Panc1 (cell line): ENCODE measurements at regions of chr7 and their contacts with region 1.

Region 1: GRCh38 chr7:101558742-101559325 is 70.3 kb downstream of the MYL10 start:
- DNase-seq: no peak
- ATAC-seq: peak; percentile 78
- H3K4me3 ChIP-seq: no peak overlapping the region
- H3K27ac ChIP-seq: no peak overlapping the region
- H3K4me1 ChIP-seq: 0 out of 2 replicates have a peak, but pooled peaks cover 4% of the 10 kb centered on the region
- H3K27me3 ChIP-seq: no peaks in the 10 kb centered on the region
- CTCF ChIP-seq: no peak; the same call in 1 of the 2 replicates

Region 2: DNA sequence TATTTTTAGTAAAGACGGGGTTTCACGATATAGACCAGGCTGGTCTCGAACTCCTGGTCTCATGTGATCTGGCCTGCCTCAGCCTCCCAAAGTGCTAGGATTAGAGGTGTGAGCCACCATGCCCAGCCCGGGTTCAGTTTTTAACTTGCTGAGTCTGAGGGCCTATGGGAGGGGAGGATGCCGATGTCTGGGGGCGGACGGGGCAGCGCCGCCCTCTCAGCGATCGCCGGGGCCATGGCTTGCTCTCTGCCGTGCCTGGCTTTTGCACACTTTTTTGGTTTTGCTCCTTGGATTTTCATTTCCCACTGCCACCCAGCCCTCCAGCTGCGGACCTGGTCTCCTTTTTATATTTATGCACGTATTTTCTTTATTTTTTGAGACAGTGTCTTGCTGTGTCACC is 211.4 kb before region 1 on chr7:
- CTCF ChIA-PET with region 1: no interaction called
- POLR2A ChIA-PET with region 1: interaction called, 15 read pairs
- in situ Hi-C with region 1: no loop called
- intact Hi-C with region 1: no loop called
- DNase-seq: no peak
- ATAC-seq: no peak
- H3K4me3 ChIP-seq: no peak overlapping the region
- H3K27ac ChIP-seq: no peak overlapping the region
- H3K4me1 ChIP-seq: peaks cover 5% of the 10 kb centered on the region
- H3K27me3 ChIP-seq: no peaks in the 10 kb centered on the region
- CTCF ChIP-seq: no peak

Region 3: GRCh38 chr7:101622609-101623173 is 63.9 kb after region 1 on chr7:
- CTCF ChIA-PET with region 1: interaction called, 3 read pairs
- POLR2A ChIA-PET with region 1: interaction called, 13 read pairs
- in situ Hi-C with region 1: no loop called
- intact Hi-C with region 1: no loop called
- DNase-seq: no peak
- ATAC-seq: no peak
- H3K4me3 ChIP-seq: no peak overlapping the region
- H3K27ac ChIP-seq: no peak overlapping the region
- H3K4me1 ChIP-seq: peaks cover 8% of the 10 kb centered on the region; the same call in 1 of the 2 replicates
- H3K27me3 ChIP-seq: no peaks in the 10 kb centered on the region
- CTCF ChIP-seq: no peak